Activated B cell treated with CpG ODN at 0.5 μM for 24 hours (primary cell): ENCODE measurements at regions of chr7 and their contacts with region 1.

Region 1: DNA sequence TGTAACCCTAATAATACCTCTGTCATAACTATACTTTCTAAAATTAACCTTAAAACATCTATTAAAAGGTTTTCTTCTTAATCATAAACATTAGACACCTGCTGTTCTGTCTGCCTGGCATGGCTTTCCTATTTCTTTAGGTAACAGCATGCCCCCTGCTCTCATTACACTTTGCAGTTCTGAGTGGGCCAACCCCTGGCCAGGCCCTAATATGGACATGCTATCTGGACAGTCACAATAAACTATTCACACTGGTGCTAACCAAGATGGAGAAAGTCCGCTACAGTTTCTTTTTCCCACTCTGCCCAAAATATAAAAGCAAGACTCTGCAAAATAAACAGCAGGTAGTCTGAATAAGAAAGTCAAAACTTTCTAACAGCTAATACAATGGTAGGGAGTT is 84.0 kb downstream of the ELAPOR2 start:
- DNase-seq: no peak
- ATAC-seq: no peak
- H3K4me3 Mint-ChIP-seq: no peak overlapping the region
- H3K27ac Mint-ChIP-seq: no peak overlapping the region
- H3K4me1 Mint-ChIP-seq: peaks cover 5% of the 10 kb centered on the region
- H3K27me3 Mint-ChIP-seq: peaks cover 3% of the 10 kb centered on the region
- CTCF ChIP-seq: no peak

Region 2: GRCh38 chr7:86949052-86949778 is 26.2 kb before region 1 on chr7:
- CTCF ChIA-PET with region 1: no interaction called
- POLR2A ChIA-PET with region 1: no interaction called
- intact Hi-C with region 1: loop called (anchors 2 kb)
- DNase-seq: peak; percentile 15
- ATAC-seq: peak; percentile 84
- H3K4me3 Mint-ChIP-seq: peak overlapping the region; percentile 48
- H3K27ac Mint-ChIP-seq: peak overlapping the region; percentile 80
- H3K4me1 Mint-ChIP-seq: peaks cover 27% of the 10 kb centered on the region
- H3K27me3 Mint-ChIP-seq: no peaks in the 10 kb centered on the region
- CTCF ChIP-seq: no peak